Activated CD4-positive, alpha-beta memory T cell treated with anti-CD3 and anti-CD28 coated beads, Interleukin-2, amount 10 ng/mL, durations not matched to agents 7 days and 5 days (primary cell): ENCODE measurements at regions of chr22 and their contacts with region 1.

Region 1: GRCh38 chr22:46563381-46564083 is 26.1 kb upstream of the CELSR1 start:
- DNase-seq: peak; percentile 83
- H3K4me3 Mint-ChIP-seq: no peak overlapping the region
- H3K27ac Mint-ChIP-seq: peak overlapping the region; percentile 4
- H3K4me1 Mint-ChIP-seq: peaks cover 13% of the 10 kb centered on the region
- H3K27me3 Mint-ChIP-seq: no peaks in the 10 kb centered on the region

Region 2: GRCh38 chr22:46592390-46592872 is 28.9 kb after region 1 on chr22:
- CTCF ChIA-PET with region 1: interaction called, 14 read pairs
- POLR2A ChIA-PET with region 1: no interaction called
- DNase-seq: peak; percentile 77
- H3K4me3 Mint-ChIP-seq: peak overlapping the region; percentile 51
- H3K27ac Mint-ChIP-seq: peak overlapping the region; percentile 83
- H3K4me1 Mint-ChIP-seq: peaks cover 52% of the 10 kb centered on the region
- H3K27me3 Mint-ChIP-seq: no peaks in the 10 kb centered on the region

Region 3: GRCh38 chr22:46622081-46622521 is 58.6 kb after region 1 on chr22:
- CTCF ChIA-PET with region 1: interaction called, 25 read pairs
- POLR2A ChIA-PET with region 1: interaction called, 4 read pairs
- DNase-seq: no peak
- H3K4me3 Mint-ChIP-seq: no peak overlapping the region
- H3K27ac Mint-ChIP-seq: no peak overlapping the region
- H3K4me1 Mint-ChIP-seq: no peaks in the 10 kb centered on the region
- H3K27me3 Mint-ChIP-seq: no peaks in the 10 kb centered on the region

Region 4: DNA sequence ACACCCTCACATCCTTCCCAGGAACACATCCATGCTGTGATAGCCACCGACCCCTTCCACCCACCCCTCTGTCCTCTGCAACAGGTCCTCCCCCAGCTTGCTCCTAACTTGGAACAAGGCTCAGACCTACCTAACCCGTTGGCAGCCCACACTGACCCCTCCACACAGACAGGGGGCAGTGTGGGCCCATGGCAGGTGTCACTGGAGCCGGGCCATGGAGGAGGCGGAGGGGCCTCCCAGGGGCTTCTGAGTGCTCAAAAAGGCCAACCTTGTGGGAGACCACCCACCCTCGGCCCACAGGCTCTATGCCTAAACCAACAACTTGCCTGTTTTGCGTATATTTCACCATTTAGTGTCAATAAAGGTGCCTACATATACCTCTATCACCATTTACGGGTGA is 117.5 kb after region 1 on chr22:
- CTCF ChIA-PET with region 1: interaction called, 23 read pairs
- POLR2A ChIA-PET with region 1: no interaction called
- DNase-seq: peak; percentile 26
- H3K4me3 Mint-ChIP-seq: no peak overlapping the region
- H3K27ac Mint-ChIP-seq: no peak overlapping the region
- H3K4me1 Mint-ChIP-seq: peaks cover 16% of the 10 kb centered on the region
- H3K27me3 Mint-ChIP-seq: no peaks in the 10 kb centered on the region

Region 5: DNA sequence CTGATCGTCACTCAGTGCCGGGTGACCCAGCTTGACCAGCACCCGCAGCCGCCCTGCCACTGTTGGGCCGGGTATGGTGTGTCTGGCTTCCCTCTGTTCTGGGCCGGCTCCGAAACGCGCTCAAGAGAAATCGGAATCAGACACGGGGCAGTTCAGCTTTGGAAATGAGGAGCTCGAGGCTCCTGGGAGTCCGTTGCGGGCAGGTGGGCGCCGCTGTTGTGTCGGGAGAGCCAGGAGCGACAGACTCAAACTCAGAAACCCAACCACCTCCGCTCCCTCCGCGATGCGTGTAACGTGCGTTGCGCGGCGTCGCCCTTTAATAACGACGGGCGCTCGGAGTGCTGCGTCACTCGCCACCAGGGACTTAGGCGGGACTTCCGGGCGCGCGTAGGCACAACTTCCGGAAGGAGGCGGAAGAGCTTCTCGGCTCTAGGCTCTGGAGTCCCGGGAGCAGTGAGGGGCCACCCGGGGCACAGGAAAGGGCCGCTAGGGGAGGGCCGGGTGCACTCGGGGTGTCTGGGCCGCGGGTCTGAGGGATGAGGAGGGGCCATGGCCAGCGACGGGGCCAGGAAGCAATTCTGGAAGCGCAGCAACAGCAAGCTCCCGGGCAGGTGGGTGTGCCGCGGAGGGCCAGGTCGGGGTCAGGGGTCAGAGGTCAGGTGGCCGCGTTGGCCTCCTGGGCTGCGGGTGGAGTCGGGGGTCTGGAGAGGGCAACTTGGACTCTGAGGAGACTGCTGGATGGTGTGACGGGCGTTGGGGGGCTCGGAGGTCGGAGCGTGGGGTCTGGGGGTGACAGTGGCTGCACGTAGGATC is 198.9 kb after region 1 on chr22 and contains the start of gene TBC1D22A:
- CTCF ChIA-PET with region 1: interaction called, 11 read pairs
- POLR2A ChIA-PET with region 1: no interaction called
- DNase-seq: peak; percentile 95
- H3K4me3 Mint-ChIP-seq: peak within 1 kb of the TSS; percentile 98
- H3K27ac Mint-ChIP-seq: peak within 1 kb of the TSS; percentile 92
- H3K4me1 Mint-ChIP-seq: peaks cover 58% of the 10 kb centered on the region
- H3K27me3 Mint-ChIP-seq: no peaks in the 10 kb centered on the region
- total RNA-seq, gene TBC1D22A: 38.5 to 41.0 TPM